ENCODE measurements at regions of chr13 and their contacts with region 1.

Region 1: GRCh38 chr13:48483575-48483974 is 49.3 kb downstream of the RCBTB2 start:
- H3K4me3 Mint-ChIP-seq: no peak overlapping the region
- H3K27ac Mint-ChIP-seq: no peak overlapping the region
- H3K4me1 Mint-ChIP-seq: peaks cover 48% of the 10 kb centered on the region
- H3K27me3 Mint-ChIP-seq: no peaks in the 10 kb centered on the region

Region 2: GRCh38 chr13:46926916-46927590 is 1556.5 kb before region 1 on chr13:
- intact Hi-C with region 1: no loop called
- H3K4me3 Mint-ChIP-seq: no peak overlapping the region
- H3K27ac Mint-ChIP-seq: no peak overlapping the region
- H3K4me1 Mint-ChIP-seq: no peaks in the 10 kb centered on the region
- H3K27me3 Mint-ChIP-seq: no peaks in the 10 kb centered on the region

Region 3: DNA sequence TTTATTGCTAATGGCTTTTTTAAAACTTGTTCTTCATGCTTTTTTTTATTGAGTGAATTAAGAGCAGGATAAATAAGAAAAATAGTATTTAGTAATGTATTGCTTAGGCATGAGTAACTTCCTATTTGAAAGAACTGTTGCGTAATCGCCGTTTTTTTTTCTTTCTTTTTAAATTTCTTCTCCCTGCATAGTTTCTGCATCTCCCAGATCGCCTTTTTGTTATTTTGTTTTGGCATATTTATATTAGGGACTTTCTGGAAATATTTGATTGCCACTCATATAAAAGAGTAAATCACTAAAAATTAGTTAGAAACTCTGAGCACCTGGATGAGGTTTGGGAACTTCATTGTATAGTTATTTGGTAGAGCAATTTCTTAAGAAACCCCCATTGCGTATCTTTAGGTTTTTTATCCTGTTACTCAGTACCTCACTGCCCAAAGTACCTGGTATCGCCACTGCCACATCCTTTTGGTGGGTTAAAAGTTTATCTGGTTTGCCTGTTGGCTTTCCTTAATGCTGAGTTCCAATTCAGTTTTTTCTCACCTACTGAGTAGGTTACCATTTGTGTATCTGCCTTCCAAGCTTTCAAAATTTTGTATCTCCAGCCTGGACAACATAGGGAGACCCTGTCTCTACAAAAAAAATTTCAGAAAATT is 34.5 kb before region 1 on chr13:
- intact Hi-C with region 1: loop called (anchors 5 kb)
- H3K4me3 Mint-ChIP-seq: peak overlapping the region; percentile 44
- H3K27ac Mint-ChIP-seq: peak overlapping the region; percentile 81
- H3K4me1 Mint-ChIP-seq: peaks cover 21% of the 10 kb centered on the region
- H3K27me3 Mint-ChIP-seq: no peaks in the 10 kb centered on the region

Measured in dendritic cell treated with granulocyte-macrophage colony-stimulating factor and Interleukin-4, amounts not matched to agents 40 ng/mL and 50 ng/mL, for 4 days (primary cell).